AG04449 (cell line): ENCODE measurements at regions of chr2 and their contacts with region 1.

Region 1: DNA sequence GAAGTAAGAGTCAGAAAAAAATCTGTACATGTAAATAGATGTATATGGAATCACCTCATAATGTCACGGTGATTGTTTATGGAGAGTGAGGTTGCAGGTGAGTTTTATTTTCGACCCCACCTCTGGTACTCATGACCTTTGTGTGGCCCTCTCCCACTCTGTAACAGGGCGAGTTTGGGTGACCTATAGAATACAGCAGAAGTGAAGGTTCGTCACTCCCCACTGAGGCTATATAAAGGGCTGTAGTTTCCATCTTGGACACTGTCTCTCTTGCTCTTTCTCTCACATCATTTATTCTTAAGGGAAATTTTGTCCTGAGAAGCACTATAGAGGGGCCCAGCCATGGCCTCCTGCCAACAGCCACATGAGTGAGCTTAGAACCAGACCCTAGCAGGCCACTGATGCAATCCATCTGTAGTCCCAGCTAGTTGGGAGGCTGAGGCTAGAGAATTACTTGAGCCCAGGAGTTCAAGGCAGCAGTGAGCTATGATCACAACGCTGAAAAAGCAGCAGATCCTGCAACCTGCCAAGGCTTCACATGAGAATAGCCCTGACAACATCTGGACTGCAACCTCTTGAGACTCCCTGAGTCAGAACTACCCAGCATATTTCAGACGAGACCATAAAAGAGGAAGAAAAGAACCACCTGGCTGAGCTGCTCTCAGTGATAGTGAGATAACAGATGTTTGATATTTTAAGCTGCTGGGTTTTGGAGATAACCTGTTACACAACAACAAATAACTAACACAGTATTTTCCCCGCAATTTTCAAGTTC is 74.3 kb upstream of the SLC1A4 start:
- DNase-seq: no peak
- H3K4me3 ChIP-seq: no peak overlapping the region
- CTCF ChIP-seq: no peak

Region 2: GRCh38 chr2:64932371-64933216 is 17.7 kb after region 1 on chr2:
- CTCF ChIA-PET with region 1: interaction called, 13 read pairs
- POLR2A ChIA-PET with region 1: no interaction called
- DNase-seq: no peak
- H3K4me3 ChIP-seq: no peak overlapping the region
- CTCF ChIP-seq: no peak

Region 3: GRCh38 chr2:65024149-65024829 is 109.4 kb after region 1 on chr2:
- CTCF ChIA-PET with region 1: interaction called, 331 read pairs
- POLR2A ChIA-PET with region 1: no interaction called
- DNase-seq: peak; percentile 77
- H3K4me3 ChIP-seq: no peak overlapping the region
- CTCF ChIP-seq: no peak

Region 4: DNA sequence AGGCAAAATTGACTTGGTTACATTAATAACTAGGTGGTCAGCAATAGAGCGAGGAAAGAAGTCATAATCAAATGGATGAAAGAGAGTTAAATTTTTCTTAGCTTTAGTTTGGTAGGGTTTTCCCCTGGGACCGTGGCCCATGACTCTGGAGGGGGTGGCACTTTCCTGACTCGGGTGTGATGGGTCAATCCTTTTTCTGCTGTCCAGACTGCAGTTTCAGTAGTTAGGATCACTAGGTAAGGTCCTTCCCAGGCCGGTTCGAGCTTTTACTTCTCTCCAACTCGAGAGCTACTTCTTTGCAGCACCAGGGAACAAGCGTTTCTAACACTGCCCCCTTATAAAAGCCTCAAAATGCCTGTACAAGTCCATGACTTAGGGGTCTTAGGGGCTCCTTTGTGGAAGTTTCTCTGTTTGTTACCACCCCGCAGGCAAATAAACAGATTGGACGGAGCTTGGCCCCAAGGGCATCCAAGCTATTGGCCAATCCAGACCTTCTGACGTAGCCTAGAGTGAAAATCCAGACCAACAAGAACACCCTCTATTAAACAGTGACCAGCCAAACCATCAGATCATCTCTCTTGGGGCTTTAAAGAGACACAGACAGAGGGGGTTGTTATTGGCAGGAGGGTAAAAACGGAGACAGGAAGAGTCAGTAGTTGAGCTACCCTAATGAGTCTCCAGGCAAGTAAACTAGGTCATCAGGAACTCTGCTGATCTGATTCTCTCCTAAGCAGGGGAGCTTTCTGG is 131.9 kb after region 1 on chr2:
- CTCF ChIA-PET with region 1: interaction called, 331 read pairs
- POLR2A ChIA-PET with region 1: no interaction called
- DNase-seq: no peak
- H3K4me3 ChIP-seq: no peak overlapping the region
- CTCF ChIP-seq: no peak

Region 5: DNA sequence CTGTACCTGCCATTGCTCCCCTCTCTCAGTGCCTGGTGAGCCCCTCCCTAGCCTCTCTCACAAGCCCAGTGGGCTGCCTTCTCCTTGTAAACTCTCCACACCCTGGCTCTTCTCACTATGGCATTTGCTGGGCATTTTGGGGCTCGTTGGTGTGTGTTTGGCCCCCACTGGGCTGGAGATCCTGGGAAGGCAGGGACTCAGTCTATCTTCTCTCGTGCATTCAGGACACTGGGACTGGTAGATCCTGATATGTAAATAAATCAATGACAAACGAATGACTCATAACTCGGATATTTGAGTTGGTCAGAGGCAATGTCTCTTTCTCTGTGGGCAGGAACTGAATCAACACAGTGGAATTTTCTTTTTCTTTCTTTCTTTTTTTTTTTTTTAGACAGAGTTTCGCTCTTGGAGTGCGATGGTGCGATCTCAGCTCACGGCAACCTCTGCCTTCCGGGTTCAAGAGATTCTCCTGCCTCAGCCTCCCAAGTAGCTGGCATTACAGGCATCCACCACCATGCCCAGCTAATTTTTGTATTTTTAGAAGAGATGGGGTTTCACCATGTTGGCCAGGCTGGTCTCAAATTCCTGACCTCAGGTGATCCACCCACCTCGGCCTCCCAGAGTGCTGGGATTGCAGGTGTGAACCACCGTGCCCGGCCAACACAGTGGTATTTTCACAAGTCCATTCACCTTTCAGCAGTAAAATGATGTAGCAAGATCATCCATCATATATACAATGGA is 662.1 kb after region 1 on chr2:
- CTCF ChIA-PET with region 1: interaction called, 16 read pairs
- POLR2A ChIA-PET with region 1: no interaction called
- DNase-seq: peak; percentile 68
- H3K4me3 ChIP-seq: peak overlapping the region; percentile 20; the same call in 1 of the 2 replicates
- CTCF ChIP-seq: no peak